Dendritic cell treated with granulocyte-macrophage colony-stimulating factor and Interleukin-4, amounts not matched to agents 40 ng/mL and 50 ng/mL, for 4 days (primary cell): ENCODE measurements at regions of chrX and their contacts with region 1.

Region 1: GRCh38 chrX:23901805-23902204 is 5.9 kb downstream of the APOO start:
- H3K4me3 Mint-ChIP-seq: no peak overlapping the region
- H3K27ac Mint-ChIP-seq: no peak overlapping the region
- H3K4me1 Mint-ChIP-seq: peaks cover 10% of the 10 kb centered on the region
- H3K27me3 Mint-ChIP-seq: no peaks in the 10 kb centered on the region

Region 2: DNA sequence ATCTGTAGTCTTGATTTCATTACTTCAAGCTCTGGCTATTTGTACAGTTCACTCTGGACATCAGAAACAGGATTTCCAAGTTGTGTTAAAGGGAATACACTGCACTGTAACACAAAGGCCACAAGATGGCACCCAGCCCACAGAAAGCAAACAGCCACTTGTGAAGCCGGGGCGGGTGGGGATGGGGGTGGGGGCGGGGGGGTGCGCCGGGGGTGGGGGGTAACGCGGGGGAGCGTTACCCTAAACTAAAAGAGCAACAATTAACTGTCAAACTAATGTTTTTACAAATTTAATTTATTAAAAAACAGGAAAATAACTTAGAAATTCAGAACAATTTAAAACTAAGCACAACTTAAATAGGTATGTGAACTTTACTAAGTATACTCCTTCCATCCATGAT is 207.2 kb before region 1 on chrX:
- intact Hi-C with region 1: loop called (anchors 1 kb)
- H3K4me3 Mint-ChIP-seq: no peak overlapping the region
- H3K27ac Mint-ChIP-seq: no peak overlapping the region
- H3K4me1 Mint-ChIP-seq: peaks cover 4% of the 10 kb centered on the region
- H3K27me3 Mint-ChIP-seq: no peaks in the 10 kb centered on the region

Region 3: DNA sequence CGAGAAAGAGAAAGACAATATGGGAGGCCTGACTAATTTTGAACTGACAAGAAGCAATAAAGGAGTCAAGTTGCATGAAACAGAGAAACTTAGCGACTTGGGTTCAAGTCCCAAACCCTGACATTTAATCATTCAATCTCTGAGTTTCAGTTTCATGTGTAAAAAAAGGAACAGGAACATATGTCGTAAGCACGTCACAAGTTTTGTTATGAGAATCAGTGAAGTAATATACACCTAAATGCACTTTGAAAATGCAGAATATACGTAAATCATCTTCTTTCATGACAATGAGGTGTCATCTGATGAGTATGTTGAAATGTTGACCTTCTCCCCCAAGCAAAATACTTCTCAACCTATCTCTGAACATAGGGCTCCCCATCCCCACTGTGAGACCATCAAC is 169.1 kb before region 1 on chrX:
- intact Hi-C with region 1: no loop called
- H3K4me3 Mint-ChIP-seq: no peak overlapping the region
- H3K27ac Mint-ChIP-seq: peak overlapping the region; percentile 70
- H3K4me1 Mint-ChIP-seq: peaks cover 25% of the 10 kb centered on the region
- H3K27me3 Mint-ChIP-seq: no peaks in the 10 kb centered on the region

Region 4: GRCh38 chrX:23756157-23756559 is 145.6 kb before region 1 on chrX:
- intact Hi-C with region 1: loop called (anchors 1 kb)
- H3K4me3 Mint-ChIP-seq: peak overlapping the region; percentile 40
- H3K27ac Mint-ChIP-seq: peak overlapping the region; percentile 52
- H3K4me1 Mint-ChIP-seq: no peaks in the 10 kb centered on the region
- H3K27me3 Mint-ChIP-seq: no peaks in the 10 kb centered on the region

Region 5: DNA sequence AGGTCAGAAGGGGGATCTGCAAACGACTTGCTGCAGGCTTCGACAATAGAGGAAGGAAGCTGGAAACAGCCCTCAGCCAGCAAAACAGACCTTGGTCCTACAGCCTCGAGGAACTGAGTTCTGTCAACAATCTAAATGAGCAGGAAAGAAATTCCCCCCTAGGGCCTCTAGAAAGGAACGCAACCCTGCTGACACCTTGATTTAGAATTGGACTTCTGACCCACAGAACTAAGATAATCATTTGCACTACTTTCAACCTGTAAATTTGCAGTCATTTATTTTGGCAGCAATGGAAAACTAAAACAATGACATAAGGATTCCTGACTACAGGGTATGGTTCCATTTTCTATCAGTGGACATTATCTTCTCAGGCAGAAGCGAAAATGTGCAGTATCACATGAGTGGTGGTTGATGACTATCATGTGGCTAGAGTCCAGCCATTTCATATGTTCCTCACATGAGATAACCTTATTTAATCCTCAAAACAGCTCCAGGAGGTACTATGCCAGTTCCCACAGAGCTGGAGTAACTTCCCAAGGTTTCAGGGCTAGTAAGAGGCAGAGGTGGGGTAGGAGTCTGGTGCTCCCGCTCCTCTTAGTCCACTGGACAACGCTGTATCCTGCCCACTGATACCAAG is 57.2 kb before region 1 on chrX:
- intact Hi-C with region 1: loop called (anchors 5 kb)
- H3K4me3 Mint-ChIP-seq: peak overlapping the region; percentile 24
- H3K27ac Mint-ChIP-seq: peak overlapping the region; percentile 96
- H3K4me1 Mint-ChIP-seq: peaks cover 45% of the 10 kb centered on the region
- H3K27me3 Mint-ChIP-seq: no peaks in the 10 kb centered on the region